IMR-90 (cell line): ENCODE measurements at regions of chr5 and their contacts with region 1.

Region 1: GRCh38 chr5:14644623-14645237 is 19.8 kb upstream of the OTULIN start:
- DNase-seq: no peak
- ATAC-seq: no peak
- H3K4me3 ChIP-seq: no peak overlapping the region
- H3K27ac ChIP-seq: no peak overlapping the region
- H3K4me1 ChIP-seq: no peaks in the 10 kb centered on the region
- H3K27me3 ChIP-seq: peaks cover 26% of the 10 kb centered on the region
- CTCF ChIP-seq: no peak
- POLR2A ChIP-seq: no peak
- RAD21 ChIP-seq: no peak

Region 2: DNA sequence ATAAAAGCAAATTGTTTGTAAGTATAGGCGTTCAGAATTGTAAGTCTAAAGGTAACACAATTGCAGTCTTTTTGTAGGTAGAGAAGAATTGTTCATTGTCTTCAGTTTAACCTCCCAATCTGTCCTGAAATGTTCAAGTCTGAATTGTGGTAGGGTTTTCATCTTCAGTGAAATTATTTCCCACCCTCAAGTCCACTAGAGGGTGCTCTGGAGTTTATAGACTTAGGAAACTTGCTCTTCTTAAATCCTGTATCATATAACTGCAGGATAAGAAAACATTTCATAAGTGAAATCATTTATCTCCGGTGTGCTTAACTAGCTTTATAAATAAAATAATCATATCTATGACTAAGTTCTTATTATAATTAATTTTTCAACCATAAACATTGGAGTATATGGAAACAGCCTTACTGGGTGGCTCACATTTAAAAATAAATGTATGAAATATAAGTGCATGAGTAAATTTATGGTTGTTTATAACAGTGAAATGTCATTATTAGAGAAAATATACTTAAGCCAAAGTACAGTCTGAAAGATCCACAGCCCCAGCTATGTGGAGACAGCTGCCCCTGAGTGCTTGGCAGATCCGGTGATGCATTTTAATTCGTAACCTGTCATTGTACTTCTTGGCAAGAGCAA is 245.6 kb before region 1 on chr5:
- CTCF ChIA-PET with region 1: interaction called, 9 read pairs
- POLR2A ChIA-PET with region 1: no interaction called
- dilution Hi-C with region 1: no loop called
- in situ Hi-C with region 1: loop called (anchors 10 kb)
- intact Hi-C with region 1: loop called (anchors 1 kb)
- DNase-seq: peak; percentile 74
- ATAC-seq: peak; percentile 30; the same call in 1 of the 2 replicates
- H3K4me3 ChIP-seq: no peak overlapping the region
- H3K27ac ChIP-seq: peak overlapping the region; percentile 53
- H3K4me1 ChIP-seq: peaks cover 37% of the 10 kb centered on the region
- H3K27me3 ChIP-seq: no peaks in the 10 kb centered on the region
- CTCF ChIP-seq: peak; percentile 69
- POLR2A ChIP-seq: no peak
- RAD21 ChIP-seq: peak; percentile 49

Region 3: GRCh38 chr5:14405267-14405666 is 239.5 kb before region 1 on chr5:
- CTCF ChIA-PET with region 1: interaction called, 9 read pairs
- POLR2A ChIA-PET with region 1: no interaction called
- dilution Hi-C with region 1: no loop called
- in situ Hi-C with region 1: loop called (anchors 10 kb)
- intact Hi-C with region 1: no loop called
- DNase-seq: no peak
- ATAC-seq: no peak
- H3K4me3 ChIP-seq: no peak overlapping the region
- H3K27ac ChIP-seq: peak overlapping the region; percentile 10; the same call in 1 of the 2 replicates
- H3K4me1 ChIP-seq: peaks cover 25% of the 10 kb centered on the region
- H3K27me3 ChIP-seq: no peaks in the 10 kb centered on the region
- CTCF ChIP-seq: peak; percentile 12; the same call in 1 of the 2 replicates
- POLR2A ChIP-seq: no peak
- RAD21 ChIP-seq: no peak

Region 4: DNA sequence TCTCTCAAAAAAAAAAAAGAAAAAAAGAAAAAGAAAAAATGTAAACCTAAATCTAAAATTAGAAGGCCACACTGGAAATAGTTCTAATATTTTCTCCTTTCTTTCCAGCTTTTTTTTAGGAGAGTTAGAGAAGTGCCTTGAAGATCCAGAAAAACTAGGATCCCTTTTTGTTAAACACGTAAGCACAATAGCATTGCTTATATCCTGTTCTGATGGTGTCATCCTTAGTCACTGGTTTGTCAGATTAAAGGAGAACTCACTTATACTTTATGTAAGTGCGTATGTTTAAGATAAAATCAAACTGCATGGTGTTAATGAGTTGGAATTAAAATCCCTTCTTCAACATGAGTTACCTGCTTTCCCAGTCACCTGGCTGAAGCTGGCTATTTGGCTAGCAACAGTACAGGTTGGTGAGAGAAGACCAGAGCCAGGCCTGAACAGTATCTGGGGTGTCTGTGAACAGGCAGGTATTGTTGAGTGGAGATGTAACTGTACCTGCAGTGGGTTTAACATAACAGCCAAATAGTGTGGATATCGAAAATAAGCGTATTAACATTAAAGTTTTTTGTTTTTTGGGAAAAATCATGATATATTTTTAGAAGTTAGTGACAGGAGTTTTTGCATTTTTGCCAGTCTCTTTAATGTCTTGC is 167.8 kb before region 1 on chr5:
- CTCF ChIA-PET with region 1: no interaction called
- POLR2A ChIA-PET with region 1: no interaction called
- dilution Hi-C with region 1: no loop called
- in situ Hi-C with region 1: no loop called
- intact Hi-C with region 1: no loop called
- DNase-seq: peak; percentile 90
- ATAC-seq: peak; percentile 73
- H3K4me3 ChIP-seq: no peak overlapping the region
- H3K27ac ChIP-seq: peak overlapping the region; percentile 64
- H3K4me1 ChIP-seq: peaks cover 4% of the 10 kb centered on the region
- H3K27me3 ChIP-seq: no peaks in the 10 kb centered on the region
- CTCF ChIP-seq: no peak
- POLR2A ChIP-seq: no peak
- RAD21 ChIP-seq: no peak

Region 5: DNA sequence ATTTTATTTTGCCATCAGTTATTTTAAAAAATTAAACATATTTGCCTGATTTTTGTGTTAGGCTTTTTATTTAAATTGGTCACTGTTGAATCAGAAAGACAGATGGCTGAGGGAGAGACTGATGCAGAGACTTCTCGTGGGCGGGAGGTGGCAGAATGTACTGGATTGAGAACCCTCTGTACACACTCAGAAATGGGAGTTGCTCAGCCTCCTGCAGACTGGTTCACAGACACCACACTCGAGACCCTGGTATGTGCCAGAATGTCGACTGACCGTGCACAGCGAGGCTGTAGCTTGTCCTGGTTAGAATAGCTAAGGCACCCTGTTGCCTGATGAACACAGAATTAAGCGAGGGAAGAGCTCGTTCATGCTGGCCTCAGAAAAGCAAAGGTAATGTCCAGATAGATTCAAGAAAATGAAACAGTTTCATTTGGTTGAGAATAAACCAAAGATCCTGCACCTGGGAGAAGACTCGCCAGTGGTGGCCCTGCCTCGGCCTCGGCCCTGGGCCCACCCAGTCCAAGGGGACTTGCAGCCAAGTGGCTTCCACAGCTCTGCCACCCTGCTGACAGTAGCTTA is 134.5 kb before region 1 on chr5:
- CTCF ChIA-PET with region 1: no interaction called
- POLR2A ChIA-PET with region 1: no interaction called
- dilution Hi-C with region 1: no loop called
- in situ Hi-C with region 1: no loop called
- intact Hi-C with region 1: loop called (anchors 5 kb)
- DNase-seq: no peak
- ATAC-seq: no peak
- H3K4me3 ChIP-seq: no peak overlapping the region
- H3K27ac ChIP-seq: no peak overlapping the region
- H3K4me1 ChIP-seq: no peaks in the 10 kb centered on the region
- H3K27me3 ChIP-seq: no peaks in the 10 kb centered on the region
- CTCF ChIP-seq: no peak
- POLR2A ChIP-seq: no peak
- RAD21 ChIP-seq: no peak